Activated CD4-positive, alpha-beta memory T cell treated with anti-CD3 and anti-CD28 coated beads, Interleukin-2, amount 10 ng/mL, durations not matched to agents 7 days and 5 days (primary cell): ENCODE measurements at regions of chr19 and their contacts with region 1.

Region 1: DNA sequence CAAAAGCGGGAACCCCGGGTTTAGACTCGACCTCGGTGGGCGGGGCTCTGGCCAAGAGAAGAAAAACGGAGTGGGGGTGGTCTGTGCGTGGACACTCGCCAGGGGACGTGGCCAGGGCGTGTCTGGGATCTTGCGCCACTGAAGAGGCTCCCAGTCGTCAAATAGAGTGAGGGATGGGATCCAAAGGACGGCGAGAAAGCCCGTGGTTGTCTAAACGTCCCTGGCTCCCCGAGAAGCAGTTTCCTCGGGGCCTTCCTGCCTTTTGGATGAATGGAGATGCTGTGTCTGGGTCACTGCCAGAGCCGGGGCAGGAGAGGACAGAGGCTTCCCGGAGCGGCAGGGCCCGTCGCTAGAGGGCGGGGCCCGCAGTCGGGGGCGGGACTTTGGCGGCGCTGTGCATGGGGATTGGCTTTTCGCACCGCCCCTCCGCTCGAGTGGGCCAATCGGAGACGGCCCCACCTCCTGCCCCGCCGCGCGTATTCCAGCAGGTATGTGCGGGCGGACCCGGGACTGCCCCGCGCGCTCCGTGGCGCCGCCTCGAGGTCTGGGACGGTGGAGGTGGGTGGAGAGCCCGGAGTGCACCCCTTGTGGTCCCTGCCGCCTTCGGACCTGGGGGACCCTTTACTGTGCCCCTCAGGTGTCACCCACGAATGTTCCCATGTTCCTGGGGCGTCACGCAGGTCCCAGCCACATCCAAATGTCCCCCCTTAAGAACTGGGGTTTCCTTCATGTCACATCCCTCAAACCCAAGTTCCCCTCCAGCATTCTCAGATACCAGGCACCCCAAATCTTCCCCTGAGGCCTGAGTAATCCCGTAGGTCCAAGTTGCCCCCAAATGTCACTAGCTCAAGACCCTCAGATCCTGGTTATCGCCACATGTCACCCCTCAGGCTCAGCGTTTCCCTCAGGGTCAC is 38.3 kb downstream of the ZSWIM4 start:
- DNase-seq: peak; percentile 94
- H3K4me3 Mint-ChIP-seq: peak overlapping the region; percentile 74
- H3K27ac Mint-ChIP-seq: peak overlapping the region; percentile 70
- H3K4me1 Mint-ChIP-seq: peaks cover 47% of the 10 kb centered on the region
- H3K27me3 Mint-ChIP-seq: no peaks in the 10 kb centered on the region

Region 2: DNA sequence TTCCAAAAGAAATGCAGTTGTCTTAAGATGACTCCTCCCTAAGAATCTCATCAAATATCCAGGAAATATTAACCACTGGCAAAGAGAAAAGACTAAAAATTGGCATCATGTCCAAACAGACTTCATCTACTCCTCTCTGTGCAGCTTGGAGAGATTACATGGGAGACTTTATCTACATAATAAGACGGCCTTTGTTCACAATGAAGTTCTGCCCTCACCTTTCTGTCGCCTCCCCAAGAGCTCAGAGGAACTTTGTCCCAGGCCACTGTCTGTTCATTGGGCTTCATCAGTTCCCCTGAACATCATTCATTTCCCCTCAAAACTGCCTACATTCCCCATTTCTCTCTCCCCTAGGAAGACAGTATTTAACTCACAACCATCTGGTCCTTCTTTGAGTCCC is 91.7 kb before region 1 on chr19:
- CTCF ChIA-PET with region 1: no interaction called
- POLR2A ChIA-PET with region 1: no interaction called
- DNase-seq: no peak
- H3K4me3 Mint-ChIP-seq: no peak overlapping the region
- H3K27ac Mint-ChIP-seq: no peak overlapping the region
- H3K4me1 Mint-ChIP-seq: peaks cover 2% of the 10 kb centered on the region
- H3K27me3 Mint-ChIP-seq: no peaks in the 10 kb centered on the region

Region 3: GRCh38 chr19:13846557-13847406 is 13.2 kb after region 1 on chr19:
- CTCF ChIA-PET with region 1: interaction called, 22 read pairs
- POLR2A ChIA-PET with region 1: interaction called, 73 read pairs
- DNase-seq: peak; percentile 96
- H3K4me3 Mint-ChIP-seq: peak overlapping the region; percentile 80
- H3K27ac Mint-ChIP-seq: peak overlapping the region; percentile 99
- H3K4me1 Mint-ChIP-seq: peaks cover 59% of the 10 kb centered on the region
- H3K27me3 Mint-ChIP-seq: no peaks in the 10 kb centered on the region